Activated T-helper 2 cell treated with anti-CD3 and anti-CD28 coated beads, Interferon-gamma antibody, Interleukin-2, Interleukin-4, amounts not matched to agents 10 μg/mL and 5 μg/mL and 100 μg/mL, durations not matched to agents 14 hours and 24 hours and 36 hours (primary cell): ENCODE measurements at regions of chr21 and their contacts with region 1.

Region 1: DNA sequence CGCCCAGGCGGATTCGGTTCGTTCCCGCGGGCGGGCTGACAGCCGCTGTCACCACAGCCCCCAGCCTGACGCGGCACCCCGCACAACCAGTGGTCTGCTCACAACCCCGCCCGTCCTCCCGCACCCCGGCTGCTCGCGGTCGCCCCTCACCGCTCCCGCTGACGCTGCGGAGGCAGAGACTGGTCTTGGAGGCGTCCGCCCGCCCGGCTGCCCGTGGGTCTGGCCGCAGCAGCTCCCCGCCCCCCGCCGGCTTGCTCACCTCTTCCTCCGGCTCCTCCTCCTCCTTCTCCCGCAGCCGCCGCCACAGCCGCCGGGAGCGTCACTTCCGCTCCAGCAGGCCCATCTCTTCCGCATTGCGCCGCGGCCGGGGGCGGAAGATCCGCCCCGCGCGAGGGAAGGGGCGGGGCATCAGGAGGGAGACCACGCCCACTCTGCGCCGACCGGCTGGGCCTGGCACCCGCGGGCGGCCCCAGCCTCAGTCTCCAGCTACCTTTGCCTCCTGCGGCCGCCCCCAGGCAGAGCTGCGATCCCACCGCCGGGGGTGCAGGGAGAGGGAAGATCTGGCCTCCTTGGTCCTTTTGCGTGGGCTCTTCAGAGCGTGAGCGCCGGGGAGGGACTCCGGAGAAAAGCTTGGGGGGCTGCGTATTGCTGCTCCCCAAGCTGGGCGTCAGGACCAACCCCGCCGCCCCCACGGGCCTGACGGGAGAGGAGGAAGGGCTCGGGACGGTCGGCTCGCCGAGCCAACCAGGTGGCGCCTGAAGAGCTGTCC is at the start of gene SYNJ1:
- DNase-seq: peak; percentile 93
- H3K4me3 Mint-ChIP-seq: peak within 1 kb of the TSS; percentile 98
- H3K27ac Mint-ChIP-seq: peak within 1 kb of the TSS; percentile 95
- H3K4me1 Mint-ChIP-seq: peaks cover 40% of the 10 kb centered on the region
- H3K27me3 Mint-ChIP-seq: no peaks in the 10 kb centered on the region
- total RNA-seq, gene SYNJ1: 11.8 and 16.5 TPM in 2 replicates

Region 2: GRCh38 chr21:32612075-32612998 is 115.5 kb before region 1 on chr21 and contains the start of gene CFAP298:
- intact Hi-C with region 1: loop called (anchors 5 kb)
- DNase-seq: peak; percentile 86
- H3K4me3 Mint-ChIP-seq: peak within 1 kb of the TSS; percentile 99
- H3K27ac Mint-ChIP-seq: peak within 1 kb of the TSS; percentile 89
- H3K4me1 Mint-ChIP-seq: peaks cover 4% of the 10 kb centered on the region
- H3K27me3 Mint-ChIP-seq: peaks cover 2% of the 10 kb centered on the region
- total RNA-seq, gene CFAP298: 44.5 and 48.6 TPM in 2 replicates

Region 3: DNA sequence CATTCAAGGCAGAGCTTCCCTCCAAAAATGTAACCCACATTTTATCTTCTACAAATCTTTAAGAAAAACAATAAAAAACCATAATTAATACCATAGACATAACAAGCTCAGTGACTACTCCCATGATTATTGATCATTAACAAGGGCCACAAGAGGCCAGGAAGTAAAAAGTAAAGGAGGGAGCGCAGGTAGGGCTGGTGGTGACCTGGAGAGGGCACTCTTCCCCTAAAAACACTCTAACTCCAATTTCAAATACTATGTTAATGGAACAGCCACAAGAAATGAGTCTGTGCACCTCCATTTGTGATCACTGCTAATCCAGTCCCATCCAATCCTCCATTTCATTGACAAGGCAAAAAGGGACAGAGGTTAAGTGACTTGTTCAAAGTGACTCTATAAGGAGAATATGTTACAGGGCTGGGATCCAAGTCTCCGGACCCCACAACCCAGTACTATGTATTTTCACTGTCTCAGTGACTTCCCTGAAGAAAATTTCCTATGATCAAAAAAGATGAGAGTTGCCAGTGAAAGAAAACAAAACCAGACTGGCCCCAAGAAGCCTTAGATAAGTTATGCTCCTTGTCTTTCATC is 74.5 kb before region 1 on chr21:
- intact Hi-C with region 1: loop called (anchors 2 kb)
- DNase-seq: no peak
- H3K4me3 Mint-ChIP-seq: no peak overlapping the region
- H3K27ac Mint-ChIP-seq: no peak overlapping the region
- H3K4me1 Mint-ChIP-seq: peaks cover 24% of the 10 kb centered on the region
- H3K27me3 Mint-ChIP-seq: no peaks in the 10 kb centered on the region

Region 4: GRCh38 chr21:32712043-32712442 is 15.8 kb before region 1 on chr21:
- intact Hi-C with region 1: loop called (anchors 2 kb)
- DNase-seq: no peak
- H3K4me3 Mint-ChIP-seq: no peak overlapping the region
- H3K27ac Mint-ChIP-seq: peak overlapping the region; percentile 22
- H3K4me1 Mint-ChIP-seq: peaks cover 17% of the 10 kb centered on the region
- H3K27me3 Mint-ChIP-seq: no peaks in the 10 kb centered on the region